OCI-LY7 (cell line): ENCODE measurements at regions of chr17 and their contacts with region 1.

Region 1: DNA sequence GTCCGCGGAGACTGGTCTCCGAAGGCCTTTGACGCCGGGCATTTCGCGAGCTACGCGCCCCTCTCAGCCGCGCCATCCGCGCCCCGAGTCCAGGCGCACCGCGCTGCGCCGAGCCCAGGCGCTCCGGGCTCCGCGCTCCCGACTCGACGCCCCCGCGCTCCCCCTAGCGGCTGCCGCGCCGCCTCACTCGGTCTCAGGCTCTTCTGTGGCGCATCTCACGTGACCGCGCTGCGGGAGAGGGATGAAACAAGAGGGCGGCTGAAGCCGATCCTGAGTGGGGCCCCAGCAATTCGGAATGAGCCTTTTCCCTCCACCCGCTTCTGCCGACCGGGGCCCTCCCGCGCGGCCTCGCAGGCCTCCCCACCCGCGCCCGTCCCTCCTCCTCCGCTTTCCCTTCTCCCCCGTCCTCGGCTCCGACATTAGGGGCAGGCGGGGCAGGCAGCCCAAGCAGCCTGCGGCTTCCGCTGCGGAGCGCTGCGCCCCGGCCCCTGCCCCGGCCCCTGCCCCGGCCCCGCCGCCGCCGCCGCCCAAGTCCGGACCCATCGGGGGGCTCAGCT is 42.5 kb upstream of the AMZ2 start:
- DNase-seq: peak; percentile 97
- H3K4me3 ChIP-seq: peak overlapping the region; percentile 77
- H3K27ac ChIP-seq: peak overlapping the region; percentile 84
- H3K4me1 ChIP-seq: peaks cover 55% of the 10 kb centered on the region
- CTCF ChIP-seq: peak; percentile 89

Region 2: GRCh38 chr17:68057531-68057952 is 147.8 kb before region 1 on chr17:
- CTCF ChIA-PET with region 1: no interaction called
- POLR2A ChIA-PET with region 1: no interaction called
- intact Hi-C with region 1: loop called (anchors 5 kb)
- DNase-seq: peak; percentile 63
- H3K4me3 ChIP-seq: no peak overlapping the region
- H3K27ac ChIP-seq: no peak overlapping the region
- H3K4me1 ChIP-seq: peaks cover 7% of the 10 kb centered on the region
- CTCF ChIP-seq: peak; percentile 90

Region 3: DNA sequence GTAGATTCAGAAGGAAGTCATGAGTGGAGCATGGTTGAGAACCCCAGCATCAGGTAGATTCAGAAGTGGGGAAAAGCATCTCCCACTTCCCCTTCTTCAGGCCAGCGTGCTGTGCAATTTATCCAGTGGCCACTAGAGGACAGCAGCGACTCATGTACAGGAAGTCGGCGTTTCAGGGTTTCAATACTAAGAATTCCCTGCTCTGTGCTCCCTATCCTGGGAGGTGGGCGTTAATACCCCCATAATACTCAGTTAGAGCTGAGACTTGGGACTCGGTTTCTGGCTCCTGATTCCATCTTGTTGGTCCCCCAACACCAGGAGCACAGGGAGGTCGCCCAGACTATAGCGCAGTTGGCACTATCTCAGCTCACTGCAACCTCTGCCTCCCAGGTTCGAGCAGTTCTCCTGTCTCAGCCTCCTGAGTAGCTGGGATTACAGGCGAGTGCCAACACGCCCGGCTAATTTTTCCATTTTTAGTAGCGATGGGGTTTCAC is 32.8 kb before region 1 on chr17:
- CTCF ChIA-PET with region 1: interaction called, 9 read pairs
- POLR2A ChIA-PET with region 1: interaction called, 6 read pairs
- intact Hi-C with region 1: loop called (anchors 1 kb)
- DNase-seq: peak; percentile 85
- H3K4me3 ChIP-seq: no peak overlapping the region
- H3K27ac ChIP-seq: no peak overlapping the region
- H3K4me1 ChIP-seq: peaks cover 20% of the 10 kb centered on the region
- CTCF ChIP-seq: peak; percentile 100

Region 4: DNA sequence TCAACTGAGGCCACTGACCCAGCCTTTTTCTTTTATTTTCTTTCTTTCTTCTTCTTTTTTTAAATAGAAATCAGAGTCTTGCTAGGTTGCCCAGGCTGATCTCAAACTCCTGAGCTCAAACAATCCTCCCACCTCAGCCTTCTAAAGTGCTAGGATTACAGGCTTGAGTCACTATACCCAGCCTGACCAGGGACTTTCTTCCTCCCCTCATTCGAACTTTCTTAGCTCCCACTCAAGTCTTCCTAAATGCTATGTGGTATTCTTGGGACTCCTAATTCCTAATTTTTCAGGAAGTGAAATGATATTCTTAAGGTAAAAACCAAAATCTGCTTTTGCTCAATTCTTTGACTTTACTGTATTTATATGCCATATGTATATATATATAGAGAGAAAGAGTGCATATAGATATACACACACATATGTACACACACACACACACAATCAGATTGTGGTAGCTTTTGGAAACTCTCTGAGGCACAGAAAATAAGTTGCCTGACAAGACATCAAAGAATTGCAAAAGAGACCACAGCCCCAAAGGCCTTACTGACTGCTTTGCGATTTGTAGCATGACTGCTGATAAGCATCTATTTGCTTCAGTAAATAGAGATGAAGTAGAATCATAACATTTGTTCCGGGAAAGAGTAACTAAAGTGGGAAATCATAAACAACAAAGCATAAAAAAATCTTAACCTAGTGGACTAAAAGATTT is 33.0 kb after region 1 on chr17:
- CTCF ChIA-PET with region 1: no interaction called
- POLR2A ChIA-PET with region 1: interaction called, 8 read pairs
- intact Hi-C with region 1: loop called (anchors 1 kb)
- DNase-seq: no peak
- H3K4me3 ChIP-seq: peak overlapping the region; percentile 65
- H3K27ac ChIP-seq: peak overlapping the region; percentile 96
- H3K4me1 ChIP-seq: peaks cover 85% of the 10 kb centered on the region
- CTCF ChIP-seq: no peak

Region 5: GRCh38 chr17:68247445-68248198 is 42.3 kb after region 1 on chr17 and contains the start of gene AMZ2:
- CTCF ChIA-PET with region 1: no interaction called
- POLR2A ChIA-PET with region 1: interaction called, 28 read pairs
- intact Hi-C with region 1: loop called (anchors 2 kb)
- DNase-seq: peak; percentile 97
- H3K4me3 ChIP-seq: peak within 1 kb of the TSS; percentile 80
- H3K27ac ChIP-seq: peak within 1 kb of the TSS; percentile 90
- H3K4me1 ChIP-seq: peaks cover 86% of the 10 kb centered on the region
- CTCF ChIP-seq: no peak
- total RNA-seq, gene AMZ2: 105 and 117 TPM in 2 replicates

Region 6: GRCh38 chr17:68398691-68399637 is 193.6 kb after region 1 on chr17:
- CTCF ChIA-PET with region 1: no interaction called
- POLR2A ChIA-PET with region 1: interaction called, 3 read pairs
- intact Hi-C with region 1: loop called (anchors 2 kb)
- DNase-seq: peak; percentile 92
- H3K4me3 ChIP-seq: no peak overlapping the region
- H3K27ac ChIP-seq: peak overlapping the region; percentile 8
- H3K4me1 ChIP-seq: peaks cover 30% of the 10 kb centered on the region
- CTCF ChIP-seq: peak; percentile 100